ENCODE measurements at regions of chr9 and their contacts with region 1.

Region 1: GRCh38 chr9:36728651-36729520 is 156.2 kb downstream of the MELK start:
- DNase-seq: peak in 8 of 9 donors; percentile 33 to 71 (median 40)
- ATAC-seq: peak; percentile 73
- H3K4me3 ChIP-seq: no peak overlapping the region
- H3K4me3 Mint-ChIP-seq: no peak overlapping the region
- H3K27ac ChIP-seq: no peak overlapping the region
- H3K27ac Mint-ChIP-seq: no peak overlapping the region
- H3K4me1 ChIP-seq: no peaks in the 10 kb centered on the region
- H3K4me1 Mint-ChIP-seq: peaks cover 0 to 6% (median 0%) of the 10 kb centered on the region in 7 donors
- H3K27me3 ChIP-seq: no peaks in the 10 kb centered on the region
- H3K27me3 Mint-ChIP-seq: no peaks in the 10 kb centered on the region

Region 2: GRCh38 chr9:36450110-36450732 is 278.7 kb before region 1 on chr9:
- CTCF ChIA-PET with region 1: no interaction called
- POLR2A ChIA-PET with region 1: no interaction called
- intact Hi-C with region 1: loop called in 1 of 2 experiments (anchors 1 kb)
- DNase-seq: peak in 6 of 9 donors; percentile 17 to 36 (median 34)
- ATAC-seq: no peak
- H3K4me3 ChIP-seq: no peak overlapping the region
- H3K4me3 Mint-ChIP-seq: no peak overlapping the region
- H3K27ac ChIP-seq: no peak overlapping the region
- H3K27ac Mint-ChIP-seq: no peak overlapping the region
- H3K4me1 ChIP-seq: peaks cover 5 to 14% of the 10 kb centered on the region in 2 donors
- H3K4me1 Mint-ChIP-seq: peaks cover 0 to 57% (median 38%) of the 10 kb centered on the region in 7 donors
- H3K27me3 ChIP-seq: no peaks in the 10 kb centered on the region
- H3K27me3 Mint-ChIP-seq: no peaks in the 10 kb centered on the region

Region 3: DNA sequence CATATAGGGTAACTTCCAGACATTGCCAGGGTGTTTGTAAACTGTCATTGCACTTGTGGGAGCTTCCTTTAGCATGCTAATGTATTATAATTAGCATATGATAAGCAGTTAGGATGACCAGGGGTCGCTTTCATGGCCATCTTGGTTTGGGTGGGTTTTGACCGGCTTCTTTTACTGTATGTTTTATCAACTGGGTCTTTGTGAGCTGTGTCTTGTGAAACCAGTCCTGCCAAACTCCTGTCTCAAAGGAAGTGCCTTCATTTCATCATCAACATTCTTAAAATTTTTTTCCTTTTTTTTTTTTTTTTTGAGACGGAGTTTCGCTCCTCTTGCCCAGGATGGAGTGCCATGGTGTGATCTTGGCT is 168.0 kb before region 1 on chr9:
- CTCF ChIA-PET with region 1: interaction called, 4 read pairs
- POLR2A ChIA-PET with region 1: no interaction called
- intact Hi-C with region 1: loop called (anchors 2 to 5 kb)
- DNase-seq: no peak
- ATAC-seq: no peak
- H3K4me3 ChIP-seq: no peak overlapping the region
- H3K4me3 Mint-ChIP-seq: no peak overlapping the region
- H3K27ac ChIP-seq: no peak overlapping the region
- H3K27ac Mint-ChIP-seq: no peak overlapping the region
- H3K4me1 ChIP-seq: no peaks in the 10 kb centered on the region
- H3K4me1 Mint-ChIP-seq: peaks cover 0 to 2% (median under 1%) of the 10 kb centered on the region in 7 donors
- H3K27me3 ChIP-seq: no peaks in the 10 kb centered on the region
- H3K27me3 Mint-ChIP-seq: no peaks in the 10 kb centered on the region

Region 4: DNA sequence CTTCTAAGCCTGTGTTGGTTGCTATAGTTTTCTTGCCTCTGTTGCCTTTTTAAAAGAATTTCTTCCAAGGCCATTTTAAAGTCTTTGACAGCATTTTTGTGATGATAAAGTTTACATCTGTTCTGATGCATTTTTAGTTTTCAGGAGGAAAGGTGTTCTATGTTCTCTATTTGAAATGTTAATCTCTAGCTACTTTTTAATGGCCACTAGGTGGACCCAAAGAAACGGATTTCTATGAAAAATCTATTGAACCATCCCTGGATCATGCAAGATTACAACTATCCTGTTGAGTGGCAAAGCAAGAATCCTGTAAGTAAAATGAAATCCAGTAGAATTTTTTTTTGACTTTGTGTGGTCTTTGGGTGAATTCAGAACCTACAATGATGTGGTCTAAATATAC is 96.0 kb before region 1 on chr9:
- CTCF ChIA-PET with region 1: interaction called, 7 read pairs
- POLR2A ChIA-PET with region 1: no interaction called
- intact Hi-C with region 1: loop called (anchors 1 kb)
- DNase-seq: peak in 1 of 9 donors; percentile 7
- ATAC-seq: no peak
- H3K4me3 ChIP-seq: no peak overlapping the region
- H3K4me3 Mint-ChIP-seq: no peak overlapping the region
- H3K27ac ChIP-seq: no peak overlapping the region
- H3K27ac Mint-ChIP-seq: no peak overlapping the region
- H3K4me1 ChIP-seq: no peaks in the 10 kb centered on the region
- H3K4me1 Mint-ChIP-seq: peaks cover 0 to 4% (median 0%) of the 10 kb centered on the region in 7 donors
- H3K27me3 ChIP-seq: no peaks in the 10 kb centered on the region
- H3K27me3 Mint-ChIP-seq: no peaks in the 10 kb centered on the region